A673 (cell line): ENCODE measurements at regions of chr6 and their contacts with region 1.

Region 1: GRCh38 chr6:98834060-98835031 is at the start of gene POU3F2:
- DNase-seq: peak; percentile 99
- H3K4me3 ChIP-seq: peak within 1 kb of the TSS; percentile 91
- H3K27ac ChIP-seq: peak within 1 kb of the TSS; percentile 76
- H3K4me1 ChIP-seq: peaks cover 8% of the 10 kb centered on the region
- H3K27me3 ChIP-seq: no peaks in the 10 kb centered on the region
- CTCF ChIP-seq: no peak
- total RNA-seq, gene POU3F2: 22.8 and 25.5 TPM in 2 replicates

Region 2: GRCh38 chr6:98343004-98343403 is 491.3 kb before region 1 on chr6:
- CTCF ChIA-PET with region 1: no interaction called
- POLR2A ChIA-PET with region 1: no interaction called
- intact Hi-C with region 1: loop called (anchors 5 kb)
- DNase-seq: no peak
- H3K4me3 ChIP-seq: no peak overlapping the region
- H3K27ac ChIP-seq: no peak overlapping the region
- H3K4me1 ChIP-seq: peaks cover 6% of the 10 kb centered on the region
- H3K27me3 ChIP-seq: peaks cover 28% of the 10 kb centered on the region
- CTCF ChIP-seq: no peak

Region 3: GRCh38 chr6:98574992-98575391 is 259.4 kb before region 1 on chr6:
- CTCF ChIA-PET with region 1: no interaction called
- POLR2A ChIA-PET with region 1: no interaction called
- intact Hi-C with region 1: loop called (anchors 10 kb)
- DNase-seq: no peak
- H3K4me3 ChIP-seq: no peak overlapping the region
- H3K27ac ChIP-seq: no peak overlapping the region
- H3K4me1 ChIP-seq: peaks cover 9% of the 10 kb centered on the region
- H3K27me3 ChIP-seq: no peaks in the 10 kb centered on the region
- CTCF ChIP-seq: no peak